CD8-positive, alpha-beta T cell (primary cell): ENCODE measurements at regions of chr5 and their contacts with region 1.

Region 1: DNA sequence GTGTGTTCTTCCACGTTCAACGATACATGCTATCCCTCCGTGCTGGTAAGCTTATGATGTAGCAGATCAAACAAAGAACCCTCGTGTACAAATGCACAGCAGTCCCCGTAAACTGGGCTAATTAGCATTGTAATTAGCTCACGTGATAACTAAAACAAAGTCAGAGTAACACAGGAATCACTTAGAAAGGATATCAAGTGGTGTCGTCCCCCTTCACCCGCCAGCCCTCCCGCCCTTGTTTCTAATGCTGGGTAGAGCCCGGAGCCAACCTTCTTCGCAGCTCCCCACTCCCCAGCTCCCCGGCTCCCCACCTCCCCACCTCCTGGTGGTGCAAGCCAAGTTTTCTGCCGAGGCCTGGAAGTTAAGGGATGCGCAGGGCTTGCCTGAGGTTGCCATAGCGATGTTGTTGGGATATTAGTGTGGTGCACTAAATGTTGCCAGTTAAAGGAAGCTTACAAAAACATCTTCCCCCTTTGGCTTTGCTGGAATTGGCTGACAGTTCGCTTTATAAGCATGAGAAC is 357.9 kb upstream of the CCNH start:
- DNase-seq: no peak
- ATAC-seq: no peak
- H3K4me3 ChIP-seq: no peak overlapping the region
- H3K4me3 Mint-ChIP-seq: no peak overlapping the region
- H3K27ac ChIP-seq: no peak overlapping the region
- H3K27ac Mint-ChIP-seq: no peak overlapping the region
- H3K4me1 ChIP-seq: no peaks in the 10 kb centered on the region
- H3K4me1 Mint-ChIP-seq: no peaks in the 10 kb centered on the region
- H3K27me3 ChIP-seq: peaks cover 0 to 3% of the 10 kb centered on the region in 2 experiments
- H3K27me3 Mint-ChIP-seq: peaks cover 21% of the 10 kb centered on the region
- CTCF ChIP-seq: no peak

Region 2: DNA sequence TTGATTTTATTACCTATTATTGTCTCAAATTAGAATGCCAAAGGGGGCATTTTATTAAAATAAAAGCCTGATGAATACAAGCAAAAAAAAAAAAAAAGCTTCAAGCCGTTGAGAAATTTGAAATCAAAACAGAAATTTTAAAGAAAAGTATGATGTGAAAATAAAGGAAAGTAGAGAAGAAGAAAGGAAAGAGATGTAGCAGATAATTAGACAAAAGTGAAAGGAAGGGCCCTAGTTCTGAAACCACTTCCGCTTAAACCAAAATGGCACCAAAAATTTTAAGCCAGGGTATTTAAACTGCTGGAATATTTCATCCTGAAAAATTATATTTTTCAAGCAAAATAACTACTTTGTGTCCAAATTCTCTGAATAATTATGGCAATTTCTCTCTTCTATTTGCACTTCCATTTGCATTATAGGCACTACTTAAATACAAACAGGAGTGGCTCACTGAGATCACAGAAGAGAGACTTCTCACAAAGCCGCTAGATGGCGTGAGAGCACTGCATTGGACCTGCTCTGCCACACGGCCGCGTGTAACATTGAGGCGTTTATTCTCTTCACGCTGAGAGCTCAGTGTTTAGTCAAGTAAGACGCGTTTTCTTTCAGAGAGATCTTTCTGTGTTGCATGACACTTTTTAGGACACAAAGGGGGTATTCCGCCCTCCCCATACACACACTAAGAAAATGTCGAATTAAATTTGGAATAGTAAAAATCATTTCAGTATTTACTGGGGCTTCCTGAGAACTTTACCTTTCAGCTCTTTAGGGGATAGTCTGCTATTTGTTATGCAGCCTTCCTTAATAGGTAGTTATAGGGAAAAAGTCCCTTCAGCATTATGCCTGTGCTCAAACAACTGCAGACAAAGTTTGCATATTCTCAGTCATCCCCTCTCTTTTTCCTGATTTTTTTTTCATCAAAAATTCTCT is 10.4 kb after region 1 on chr5:
- CTCF ChIA-PET with region 1: interaction called, 19 read pairs
- POLR2A ChIA-PET with region 1: no interaction called
- intact Hi-C with region 1: no loop called
- DNase-seq: peak; percentile 46 to 86 (median 77)
- ATAC-seq: peak; percentile 99
- H3K4me3 ChIP-seq: no peak overlapping the region
- H3K4me3 Mint-ChIP-seq: no peak overlapping the region
- H3K27ac ChIP-seq: no peak overlapping the region
- H3K27ac Mint-ChIP-seq: no peak overlapping the region
- H3K4me1 ChIP-seq: no peaks in the 10 kb centered on the region
- H3K4me1 Mint-ChIP-seq: no peaks in the 10 kb centered on the region
- H3K27me3 ChIP-seq: peaks cover 3 to 8% of the 10 kb centered on the region in 2 experiments
- H3K27me3 Mint-ChIP-seq: peaks cover 17% of the 10 kb centered on the region
- CTCF ChIP-seq: peak; percentile 81